ENCODE measurements at regions of chr3 and their contacts with region 1.

Region 1: GRCh38 chr3:123081718-123082369 is 15.0 kb downstream of the PDIA5 start:
- DNase-seq: no peak
- ATAC-seq: no peak
- H3K4me3 Mint-ChIP-seq: peak overlapping the region; percentile 4
- H3K27ac Mint-ChIP-seq: no peak overlapping the region
- H3K4me1 Mint-ChIP-seq: peaks cover 26% of the 10 kb centered on the region
- H3K27me3 Mint-ChIP-seq: no peaks in the 10 kb centered on the region
- CTCF ChIP-seq: no peak

Region 2: DNA sequence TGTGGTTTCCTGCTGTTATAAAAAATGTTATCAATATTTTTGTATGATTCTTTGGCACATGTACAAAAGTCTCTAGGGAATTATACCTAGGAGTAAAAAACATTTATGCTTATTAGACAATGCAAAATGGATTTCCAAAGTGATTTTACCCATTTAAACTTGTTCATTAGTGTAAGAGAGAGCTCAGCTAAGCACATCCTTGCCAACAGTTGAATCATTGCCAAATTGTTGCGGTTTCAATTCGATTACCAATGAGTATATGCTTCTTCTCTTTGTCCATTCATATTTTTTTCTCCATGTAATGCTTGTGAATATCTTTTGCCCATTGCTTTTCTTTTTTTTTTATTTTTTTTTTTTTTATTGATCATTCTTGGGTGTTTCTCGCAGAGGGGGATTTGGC is 881.2 kb before region 1 on chr3:
- CTCF ChIA-PET with region 1: no interaction called
- POLR2A ChIA-PET with region 1: no interaction called
- intact Hi-C with region 1: no loop called
- DNase-seq: no peak
- ATAC-seq: no peak
- H3K4me3 Mint-ChIP-seq: no peak overlapping the region
- H3K27ac Mint-ChIP-seq: no peak overlapping the region
- H3K4me1 Mint-ChIP-seq: no peaks in the 10 kb centered on the region
- H3K27me3 Mint-ChIP-seq: peaks cover 1% of the 10 kb centered on the region
- CTCF ChIP-seq: no peak

Region 3: DNA sequence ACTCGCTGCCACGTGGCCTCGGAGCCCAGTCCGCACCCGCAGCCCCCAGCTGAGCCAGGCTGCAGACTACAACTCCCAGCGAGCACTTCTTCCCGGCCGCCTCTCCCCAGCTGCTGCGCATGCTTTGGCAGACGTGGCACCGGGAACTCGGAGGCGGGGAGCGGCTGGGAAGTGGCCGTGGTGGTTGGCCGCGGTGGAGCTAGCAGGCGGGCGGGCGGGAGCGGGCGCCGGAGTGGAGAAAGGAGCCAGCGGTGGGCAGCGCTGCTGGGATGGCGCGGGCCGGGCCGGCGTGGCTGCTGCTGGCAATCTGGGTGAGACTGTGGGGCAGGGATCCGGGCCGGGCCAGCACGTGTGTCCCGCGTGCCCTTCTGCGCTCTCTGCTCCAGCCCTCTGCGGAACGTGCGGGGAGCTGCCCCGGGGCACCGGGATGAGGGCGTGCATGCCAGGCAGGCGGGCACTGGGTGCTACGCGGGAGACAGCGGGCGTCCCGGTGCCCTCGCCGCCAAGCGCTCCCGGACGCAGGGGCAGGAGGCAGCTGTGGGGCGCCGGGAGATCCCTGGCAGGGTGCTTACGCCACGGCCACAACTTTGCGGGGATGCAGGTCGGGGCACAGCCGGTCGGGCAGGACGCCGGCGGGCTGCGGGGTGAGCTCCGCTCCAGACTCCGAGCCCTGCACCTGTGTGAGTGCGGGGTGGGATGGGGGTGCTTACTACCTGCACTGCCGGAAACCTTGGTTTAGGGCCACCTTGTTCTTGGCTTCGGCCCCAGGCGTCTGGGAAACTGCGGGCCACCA is 14.8 kb before region 1 on chr3 and contains the start of gene PDIA5:
- CTCF ChIA-PET with region 1: no interaction called
- POLR2A ChIA-PET with region 1: no interaction called
- intact Hi-C with region 1: loop called (anchors 2 kb)
- DNase-seq: peak; percentile 53
- ATAC-seq: peak; percentile 81
- H3K4me3 Mint-ChIP-seq: peak within 1 kb of the TSS; percentile 85
- H3K27ac Mint-ChIP-seq: peak within 1 kb of the TSS; percentile 57
- H3K4me1 Mint-ChIP-seq: peaks cover 17% of the 10 kb centered on the region
- H3K27me3 Mint-ChIP-seq: peaks cover 5% of the 10 kb centered on the region
- CTCF ChIP-seq: no peak
- total RNA-seq, gene PDIA5: 8.5 and 10.7 TPM in 2 replicates

Region 4: GRCh38 chr3:123971406-123971805 is 889.6 kb after region 1 on chr3:
- CTCF ChIA-PET with region 1: no interaction called
- POLR2A ChIA-PET with region 1: no interaction called
- intact Hi-C with region 1: no loop called
- DNase-seq: no peak
- ATAC-seq: no peak
- H3K4me3 Mint-ChIP-seq: no peak overlapping the region
- H3K27ac Mint-ChIP-seq: no peak overlapping the region
- H3K4me1 Mint-ChIP-seq: no peaks in the 10 kb centered on the region
- H3K27me3 Mint-ChIP-seq: peaks cover 34% of the 10 kb centered on the region
- CTCF ChIP-seq: no peak

Measured in activated B cell treated with CpG ODN at 0.5 μM for 24 hours (primary cell).